Colonic mucosa (tissue), 4 donors: ENCODE measurements at regions of chr11 and their contacts with region 1.

Region 1: DNA sequence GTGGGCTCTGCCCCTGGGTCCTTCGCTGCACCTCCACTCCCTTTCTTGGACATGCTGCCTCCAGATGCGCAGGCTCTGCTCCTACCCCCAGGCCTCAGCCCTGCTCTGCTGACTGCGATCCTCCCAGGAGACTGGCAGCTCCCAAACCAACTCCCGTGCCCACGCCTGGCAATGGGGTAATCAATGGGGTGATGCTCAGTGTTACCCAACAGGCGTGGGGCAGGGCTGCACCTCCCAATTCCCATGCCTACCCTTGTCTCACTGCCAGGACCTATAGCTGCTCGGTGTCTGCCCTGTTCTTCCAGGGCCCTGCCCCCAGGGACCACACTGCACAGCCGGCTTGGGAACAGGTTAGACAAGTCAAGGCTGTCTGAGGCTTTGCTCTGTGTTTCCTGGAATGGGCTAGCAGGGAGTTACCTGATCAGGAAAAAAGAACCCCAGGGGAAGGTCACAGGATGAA is at the start of gene ALDH3B2:
- DNase-seq: peak; percentile 89
- H3K4me3 ChIP-seq: no peak within 1 kb of the TSS
- H3K27ac ChIP-seq: peak within 1 kb of the TSS; percentile 50
- H3K4me1 ChIP-seq: peaks cover 11% of the 10 kb centered on the region
- H3K27me3 ChIP-seq: no peaks in the 10 kb centered on the region
- CTCF ChIP-seq: no peak
- total RNA-seq, gene ALDH3B2: 0.08 to 0.89 TPM

Region 2: DNA sequence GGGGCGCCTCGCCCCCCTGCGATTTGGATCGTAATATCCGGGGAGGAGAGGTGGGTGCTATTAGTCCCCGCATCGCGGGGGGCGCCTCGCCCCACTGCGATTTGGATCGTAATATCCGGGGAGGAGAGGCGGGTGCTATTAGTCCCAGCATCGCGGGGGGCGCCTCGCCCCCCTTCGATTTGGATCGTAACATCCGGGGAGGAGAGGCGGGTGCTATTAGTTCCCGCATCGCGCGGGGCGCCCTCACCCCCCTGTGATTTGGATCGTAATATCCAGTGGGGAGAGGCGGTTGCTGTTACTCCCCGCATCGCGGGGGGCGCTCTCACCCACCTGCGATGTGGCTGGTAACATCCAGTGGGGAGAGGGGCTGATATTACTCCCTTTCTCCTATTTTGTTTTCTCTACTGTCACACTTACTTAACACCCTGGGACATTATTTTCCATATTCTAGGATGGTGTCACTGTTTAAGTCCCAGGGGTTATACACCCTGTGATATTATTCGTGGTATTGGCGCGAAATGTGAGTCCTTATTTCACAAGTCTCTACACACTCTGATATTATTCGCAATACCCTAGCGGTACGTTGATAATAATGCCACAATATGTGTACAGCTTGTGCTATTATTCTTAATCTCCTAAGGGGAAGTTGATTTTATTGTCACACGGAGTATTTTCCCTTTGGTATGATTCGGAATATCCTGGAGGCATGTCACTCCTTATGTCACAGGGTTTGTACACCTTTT is 57.7 kb after region 1 on chr11:
- intact Hi-C with region 1: loop called (anchors 10 kb)
- DNase-seq: no peak
- H3K4me3 ChIP-seq: no peak overlapping the region
- H3K27ac ChIP-seq: no peak overlapping the region
- H3K4me1 ChIP-seq: no peaks in the 10 kb centered on the region
- H3K27me3 ChIP-seq: no peaks in the 10 kb centered on the region
- CTCF ChIP-seq: no peak